ENCODE measurements at regions of chr16 and their contacts with region 1.

Region 1: GRCh38 chr16:75555707-75556430 is at the start of gene TMEM231:
- DNase-seq: peak; percentile 98
- total RNA-seq, gene TMEM231: 8.5 TPM

Region 2: GRCh38 chr16:75590920-75591843 is 35.3 kb after region 1 on chr16:
- intact Hi-C with region 1: loop called (anchors 2 kb)
- DNase-seq: peak; percentile 86

Region 3: DNA sequence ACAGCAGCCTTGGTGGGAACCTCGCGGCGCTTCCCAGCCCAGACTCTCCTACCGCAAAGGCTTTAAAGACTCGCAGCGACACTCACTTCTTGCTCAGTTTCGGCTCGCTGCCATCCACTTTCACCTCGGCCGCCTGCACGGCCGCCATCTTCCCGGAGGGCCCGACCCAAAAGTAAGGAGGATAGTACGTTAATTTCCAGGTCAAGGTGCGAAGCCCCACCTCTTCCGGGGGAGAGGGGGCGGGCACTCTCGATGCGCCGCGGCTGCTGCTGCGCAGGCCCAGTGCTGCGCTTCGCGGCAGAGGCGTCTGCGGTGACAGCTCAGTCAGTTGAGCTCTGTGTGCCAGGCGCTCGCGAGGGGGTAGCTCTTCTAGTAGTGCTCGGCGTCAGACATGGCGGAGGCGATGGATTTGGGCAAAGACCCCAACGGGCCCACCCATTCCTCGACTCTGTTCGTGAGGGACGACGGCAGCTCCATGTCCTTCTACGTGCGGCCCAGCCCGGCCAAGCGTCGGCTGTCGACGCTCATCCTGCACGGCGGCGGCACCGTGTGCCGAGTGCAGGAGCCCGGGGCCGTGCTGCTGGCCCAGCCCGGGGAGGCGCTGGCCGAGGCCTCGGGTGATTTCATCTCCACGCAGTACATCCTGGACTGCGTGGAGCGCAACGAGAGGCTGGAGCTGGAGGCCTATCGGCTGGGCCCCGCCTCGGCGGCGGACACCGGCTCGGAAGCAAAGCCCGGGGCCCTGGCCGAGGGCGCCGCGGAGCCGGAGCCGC is 91.8 kb after region 1 on chr16 and contains the starts of genes KARS1 and TERF2IP:
- intact Hi-C with region 1: loop called (anchors 5 kb)
- DNase-seq: peak; percentile 98
- total RNA-seq, gene KARS1: 89.3 TPM
- total RNA-seq, gene TERF2IP: 76.0 TPM